ENCODE measurements at regions of chr3 and their contacts with region 1.

Region 1: GRCh38 chr3:177359593-177360357 is 162.5 kb upstream of the TBL1XR1 start:
- DNase-seq: peak; percentile 96
- ATAC-seq: peak; percentile 89 to 95 (median 93)
- H3K4me3 ChIP-seq: peak overlapping the region in 8 of 10 donors; percentile 14 to 51 (median 46)
- H3K27ac ChIP-seq: peak overlapping the region; percentile 64 to 97 (median 91)
- H3K4me1 ChIP-seq: peaks cover 34 to 77% (median 59%) of the 10 kb centered on the region in 9 donors
- H3K27me3 ChIP-seq: no peaks in the 10 kb centered on the region
- CTCF ChIP-seq: peak in 2 of 9 donors; percentile 19 to 31

Region 2: GRCh38 chr3:177013681-177014280 is 346.0 kb before region 1 on chr3:
- intact Hi-C with region 1: no loop called
- DNase-seq: no peak
- ATAC-seq: no peak
- H3K4me3 ChIP-seq: no peak overlapping the region
- H3K27ac ChIP-seq: no peak overlapping the region
- H3K4me1 ChIP-seq: no peaks in the 10 kb centered on the region
- H3K27me3 ChIP-seq: no peaks in the 10 kb centered on the region
- CTCF ChIP-seq: no peak

Region 3: DNA sequence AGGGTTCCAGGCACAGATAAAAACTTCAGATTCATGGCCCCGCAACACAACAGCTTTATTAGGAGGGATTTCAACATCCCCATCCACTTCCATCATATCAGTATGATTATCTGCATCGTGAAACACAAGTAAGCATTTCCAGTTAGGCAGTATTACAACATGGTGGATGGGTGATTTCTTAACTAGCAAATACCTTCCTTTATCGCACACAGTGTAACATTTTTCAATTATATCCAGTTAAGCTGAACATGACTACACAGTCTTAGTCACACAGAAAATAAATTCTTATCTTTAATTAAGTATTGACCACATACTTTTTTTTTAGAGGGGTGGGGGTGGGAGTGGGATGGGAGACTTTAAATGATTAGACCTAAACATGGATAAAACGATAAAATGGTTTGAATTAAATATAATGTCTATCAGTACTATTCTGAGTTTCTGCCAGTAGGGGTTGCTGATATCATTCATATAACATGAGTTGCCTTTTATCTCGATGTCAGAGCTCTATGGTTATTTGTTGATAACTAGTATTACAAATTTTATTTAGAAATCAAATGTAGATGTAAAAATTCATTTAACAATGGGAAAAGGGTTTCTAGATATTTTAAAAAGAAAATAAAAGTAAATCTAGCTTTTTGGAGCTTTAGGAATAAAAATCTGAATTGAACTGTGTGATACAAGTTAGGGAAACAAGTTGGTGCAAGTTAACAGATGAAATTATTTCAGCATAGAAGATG is 309.1 kb before region 1 on chr3:
- intact Hi-C with region 1: loop called in 9 of 10 experiments (anchors 2 to 10 kb)
- DNase-seq: no peak
- ATAC-seq: peak in 7 of 8 donors; percentile 48 to 87 (median 65)
- H3K4me3 ChIP-seq: no peak overlapping the region
- H3K27ac ChIP-seq: no peak overlapping the region
- H3K4me1 ChIP-seq: peaks cover 0 to 23% (median 15%) of the 10 kb centered on the region in 9 donors
- H3K27me3 ChIP-seq: no peaks in the 10 kb centered on the region
- CTCF ChIP-seq: peak in 8 of 9 donors; percentile 29 to 76 (median 62)

Region 4: GRCh38 chr3:177294221-177294620 is 65.6 kb before region 1 on chr3:
- intact Hi-C with region 1: loop called in 2 of 10 experiments (anchors 2 to 5 kb)
- DNase-seq: peak in 1 of 2 donors; percentile 86
- ATAC-seq: peak; percentile 93 to 98 (median 95)
- H3K4me3 ChIP-seq: no peak overlapping the region
- H3K27ac ChIP-seq: peak overlapping the region; percentile 35 to 95 (median 79)
- H3K4me1 ChIP-seq: peaks cover 3 to 33% (median 19%) of the 10 kb centered on the region in 9 donors
- H3K27me3 ChIP-seq: no peaks in the 10 kb centered on the region
- CTCF ChIP-seq: no peak

Region 5: GRCh38 chr3:177491296-177492032 is 131.7 kb after region 1 on chr3:
- intact Hi-C with region 1: loop called in 1 of 10 experiments (anchors 10 kb)
- DNase-seq: peak in 1 of 2 donors; percentile 63
- ATAC-seq: peak in 7 of 8 donors; percentile 79 to 94 (median 91)
- H3K4me3 ChIP-seq: no peak overlapping the region
- H3K27ac ChIP-seq: peak overlapping the region in 6 of 10 donors; percentile 8 to 49 (median 34)
- H3K4me1 ChIP-seq: peaks cover 0 to 30% (median 17%) of the 10 kb centered on the region in 9 donors
- H3K27me3 ChIP-seq: no peaks in the 10 kb centered on the region
- CTCF ChIP-seq: no peak

Region 6: DNA sequence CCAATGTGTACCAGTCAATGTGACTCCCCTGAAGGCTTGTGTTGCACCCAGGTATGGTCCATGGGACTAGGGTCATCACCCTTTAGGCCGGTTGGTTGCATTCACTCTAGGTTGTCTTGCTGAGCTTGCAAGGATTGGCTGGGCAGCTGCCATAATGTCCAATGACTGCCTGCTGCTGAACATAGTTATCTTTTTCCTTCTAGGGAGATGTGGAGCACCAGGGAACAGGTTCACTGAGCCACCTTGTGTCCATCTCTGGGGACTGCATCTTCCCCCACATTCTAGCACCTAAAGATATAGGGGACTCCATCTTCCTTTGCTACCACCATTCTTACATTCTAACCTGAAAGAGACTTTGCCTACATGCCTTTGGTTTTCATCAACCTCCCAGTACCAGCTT is 417.9 kb after region 1 on chr3:
- intact Hi-C with region 1: loop called in 3 of 10 experiments (anchors 2 to 10 kb)
- DNase-seq: peak; percentile 22 to 46
- ATAC-seq: peak in 2 of 8 donors; percentile 25 to 51
- H3K4me3 ChIP-seq: no peak overlapping the region
- H3K27ac ChIP-seq: no peak overlapping the region
- H3K4me1 ChIP-seq: peaks cover 10 to 62% (median 36%) of the 10 kb centered on the region in 9 donors
- H3K27me3 ChIP-seq: no peaks in the 10 kb centered on the region
- CTCF ChIP-seq: peak; percentile 22 to 71 (median 57)

Region 7: GRCh38 chr3:178325330-178325729 is 965.6 kb after region 1 on chr3:
- intact Hi-C with region 1: loop called in 4 of 10 experiments (anchors 5 to 10 kb)
- DNase-seq: no peak
- ATAC-seq: peak in 1 of 8 donors; percentile 25
- H3K4me3 ChIP-seq: no peak overlapping the region
- H3K27ac ChIP-seq: peak overlapping the region in 4 of 10 donors; percentile 17 to 44 (median 41)
- H3K4me1 ChIP-seq: peaks cover 6 to 41% (median 21%) of the 10 kb centered on the region in 9 donors
- H3K27me3 ChIP-seq: no peaks in the 10 kb centered on the region
- CTCF ChIP-seq: peak in 8 of 9 donors; percentile 8 to 68 (median 54)